A673 (cell line): ENCODE measurements at regions of chr20 and their contacts with region 1.

Region 1: GRCh38 chr20:19661717-19662636 is 96.1 kb upstream of the RIN2 start:
- DNase-seq: peak; percentile 86
- H3K4me3 ChIP-seq: no peak overlapping the region
- H3K27ac ChIP-seq: peak overlapping the region; percentile 45
- H3K4me1 ChIP-seq: peaks cover 38% of the 10 kb centered on the region
- H3K27me3 ChIP-seq: no peaks in the 10 kb centered on the region
- CTCF ChIP-seq: peak; percentile 98

Region 2: DNA sequence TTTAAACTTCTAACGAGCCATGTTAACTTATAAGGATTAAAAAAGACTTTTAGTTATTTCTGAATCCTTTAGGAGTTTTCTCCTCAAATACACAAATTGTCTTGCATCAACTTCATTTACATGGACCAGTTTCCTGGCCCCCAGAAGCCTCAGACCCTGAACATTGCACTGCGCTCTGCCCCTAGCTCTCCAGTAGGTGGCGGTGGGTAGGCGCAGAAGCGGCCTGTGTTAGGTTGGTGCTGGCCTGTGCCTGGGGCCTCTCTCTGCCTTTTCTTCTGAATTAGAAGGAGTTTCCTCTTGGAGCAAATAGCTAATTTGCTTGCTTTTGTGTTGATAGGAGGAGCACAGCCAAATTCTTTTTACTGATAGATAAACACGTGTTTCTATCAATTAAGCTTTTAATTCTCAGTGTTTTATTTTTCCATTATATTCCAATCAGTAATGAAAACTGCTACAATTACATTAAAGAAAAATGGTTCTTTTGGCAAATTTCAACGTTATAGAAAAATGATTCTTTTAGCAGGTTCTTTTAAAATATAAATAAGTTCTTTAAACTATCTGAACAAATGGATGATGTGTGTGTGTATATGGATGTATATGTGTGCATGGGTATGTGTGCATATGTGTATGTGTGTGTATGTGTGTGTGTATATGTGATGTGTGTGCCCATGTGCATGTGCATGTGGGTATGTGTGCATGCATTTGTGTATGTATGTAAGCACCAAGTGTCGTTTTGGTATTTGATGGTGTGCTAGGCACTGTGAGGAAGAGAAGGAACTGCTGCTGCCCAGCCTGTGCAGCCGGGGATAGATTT is 1029.6 kb before region 1 on chr20:
- CTCF ChIA-PET with region 1: interaction called, 8 read pairs
- POLR2A ChIA-PET with region 1: no interaction called
- intact Hi-C with region 1: loop called (anchors 5 kb)
- DNase-seq: peak; percentile 74
- H3K4me3 ChIP-seq: no peak overlapping the region
- H3K27ac ChIP-seq: no peak overlapping the region
- H3K4me1 ChIP-seq: no peaks in the 10 kb centered on the region
- H3K27me3 ChIP-seq: no peaks in the 10 kb centered on the region
- CTCF ChIP-seq: peak; percentile 96

Region 3: GRCh38 chr20:18904624-18905023 is 757.4 kb before region 1 on chr20:
- CTCF ChIA-PET with region 1: no interaction called
- POLR2A ChIA-PET with region 1: no interaction called
- intact Hi-C with region 1: loop called (anchors 5 kb)
- DNase-seq: peak; percentile 28
- H3K4me3 ChIP-seq: no peak overlapping the region
- H3K27ac ChIP-seq: no peak overlapping the region
- H3K4me1 ChIP-seq: no peaks in the 10 kb centered on the region
- H3K27me3 ChIP-seq: no peaks in the 10 kb centered on the region
- CTCF ChIP-seq: peak; percentile 39

Region 4: DNA sequence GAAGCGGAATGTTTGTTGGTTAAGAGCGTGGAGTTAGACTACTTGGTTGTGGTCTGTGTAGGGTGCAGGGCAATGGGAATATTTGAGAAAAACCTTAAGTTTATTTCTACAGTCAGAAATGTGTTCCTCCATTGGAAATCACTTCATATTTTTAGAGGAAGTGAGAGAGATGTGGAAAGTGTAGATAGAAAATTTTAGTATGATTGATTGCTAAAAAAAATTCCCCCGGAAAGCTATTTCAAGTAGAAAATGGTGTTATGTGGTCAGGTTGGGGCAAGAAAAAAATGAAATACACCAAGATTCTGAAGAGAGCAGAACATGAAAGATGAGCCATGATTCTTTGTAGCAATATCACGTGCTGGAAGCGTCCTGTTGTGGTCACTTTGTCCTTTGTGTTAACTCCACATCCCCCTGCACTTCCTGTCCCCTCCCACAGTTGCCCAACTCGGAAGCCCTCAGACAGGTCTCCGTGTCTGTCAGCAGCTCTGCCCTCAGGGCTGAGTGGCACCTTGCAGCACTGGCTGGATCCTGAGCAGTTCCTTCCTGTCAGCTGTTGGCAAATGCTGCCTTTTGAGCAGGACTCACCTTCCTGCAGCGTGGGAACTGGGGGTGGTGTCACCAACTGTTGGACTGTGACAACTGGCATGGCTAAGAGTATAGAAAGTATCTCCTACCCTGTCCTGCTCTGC is 587.0 kb before region 1 on chr20:
- CTCF ChIA-PET with region 1: no interaction called
- POLR2A ChIA-PET with region 1: no interaction called
- intact Hi-C with region 1: loop called (anchors 5 kb)
- DNase-seq: no peak
- H3K4me3 ChIP-seq: no peak overlapping the region
- H3K27ac ChIP-seq: no peak overlapping the region
- H3K4me1 ChIP-seq: no peaks in the 10 kb centered on the region
- H3K27me3 ChIP-seq: no peaks in the 10 kb centered on the region
- CTCF ChIP-seq: no peak

Region 5: DNA sequence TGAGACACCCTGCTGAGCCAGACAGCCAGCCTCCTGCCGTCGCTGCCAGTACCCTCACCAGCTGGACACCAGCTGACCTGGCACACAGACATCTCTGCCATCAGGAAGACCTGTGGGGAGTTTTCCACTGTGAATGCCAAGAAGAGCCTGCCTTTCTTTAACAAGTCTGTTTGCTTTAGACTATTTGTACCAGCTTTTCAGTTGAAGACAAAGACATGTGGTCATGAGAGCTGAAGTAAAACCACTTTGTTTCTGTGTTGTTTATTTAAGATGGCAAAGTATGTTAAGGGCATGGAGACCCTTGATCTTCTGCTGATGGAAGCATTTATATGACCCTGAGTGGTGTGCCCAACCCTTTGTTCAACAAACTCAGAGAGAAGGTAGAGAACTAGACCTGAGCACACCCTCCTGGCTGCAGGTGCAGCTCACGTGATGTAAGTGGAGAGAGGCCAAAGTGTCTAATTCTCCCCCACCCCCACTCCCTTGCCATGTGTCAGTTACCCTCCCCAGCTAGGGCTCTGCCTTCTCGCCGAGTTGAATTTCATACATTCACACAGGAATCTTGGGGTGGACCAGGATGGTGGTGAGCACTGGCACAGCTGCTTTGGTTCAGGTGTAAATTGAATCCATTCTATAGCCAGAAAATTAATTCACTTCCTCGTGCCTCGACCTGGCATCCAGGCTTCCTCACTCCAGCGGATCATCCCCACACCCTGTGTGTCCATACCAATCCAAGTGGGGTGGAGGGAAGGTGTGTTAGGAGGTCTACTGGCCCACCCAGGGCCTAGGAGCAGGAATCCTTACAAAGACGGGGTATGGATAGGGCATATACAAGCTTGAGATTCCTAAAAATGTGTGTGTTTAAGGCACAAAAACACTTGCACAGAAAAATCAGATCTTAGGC is 531.6 kb before region 1 on chr20:
- CTCF ChIA-PET with region 1: no interaction called
- POLR2A ChIA-PET with region 1: no interaction called
- intact Hi-C with region 1: no loop called
- DNase-seq: no peak
- H3K4me3 ChIP-seq: no peak overlapping the region
- H3K27ac ChIP-seq: no peak overlapping the region
- H3K4me1 ChIP-seq: no peaks in the 10 kb centered on the region
- H3K27me3 ChIP-seq: no peaks in the 10 kb centered on the region
- CTCF ChIP-seq: no peak

Region 6: DNA sequence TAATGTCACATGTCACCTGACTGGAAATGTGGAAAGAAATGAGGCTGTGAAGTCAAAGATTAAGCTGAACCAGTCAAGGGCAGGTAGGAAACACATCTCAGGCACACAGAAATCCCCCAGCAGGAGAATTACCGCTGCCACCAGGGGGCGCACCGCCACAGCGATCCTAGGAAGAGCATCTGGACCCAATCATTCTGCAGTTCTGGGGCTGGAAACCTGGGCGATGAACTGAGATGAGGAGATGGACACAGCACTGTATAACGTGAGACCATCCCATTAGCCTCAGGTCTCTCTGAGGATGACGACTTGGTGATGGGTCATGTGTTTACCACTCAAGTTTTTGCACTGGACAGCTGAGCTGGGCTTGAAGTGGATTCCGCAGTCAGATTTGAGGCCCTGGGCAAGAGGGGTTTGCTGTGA is 456.0 kb before region 1 on chr20:
- CTCF ChIA-PET with region 1: no interaction called
- POLR2A ChIA-PET with region 1: no interaction called
- intact Hi-C with region 1: loop called (anchors 2 kb)
- DNase-seq: peak; percentile 81
- H3K4me3 ChIP-seq: no peak overlapping the region
- H3K27ac ChIP-seq: no peak overlapping the region
- H3K4me1 ChIP-seq: peaks cover 53% of the 10 kb centered on the region
- H3K27me3 ChIP-seq: no peaks in the 10 kb centered on the region
- CTCF ChIP-seq: peak; percentile 99

Region 7: DNA sequence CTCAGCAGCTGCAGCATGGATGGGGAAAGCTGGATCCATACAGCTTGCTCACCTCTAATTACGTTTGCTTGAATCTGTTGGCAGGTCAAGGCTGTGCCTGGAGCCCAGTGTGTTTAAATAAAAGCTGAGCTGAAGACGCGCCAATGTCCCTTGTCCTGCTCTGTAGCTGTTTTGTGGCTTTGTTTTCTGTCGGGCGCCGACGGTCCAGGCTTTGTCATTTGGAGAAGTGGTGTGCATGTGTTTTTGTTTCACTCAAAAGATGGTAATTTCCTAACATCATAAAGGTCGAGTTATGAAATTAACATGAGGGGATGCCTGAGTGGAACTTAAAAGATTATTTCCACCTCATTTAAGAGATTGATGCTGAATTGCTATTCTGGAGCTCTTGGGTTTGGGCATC is 342.0 kb before region 1 on chr20:
- CTCF ChIA-PET with region 1: no interaction called
- POLR2A ChIA-PET with region 1: no interaction called
- intact Hi-C with region 1: loop called (anchors 1 kb)
- DNase-seq: peak; percentile 47
- H3K4me3 ChIP-seq: peak overlapping the region; percentile 40
- H3K27ac ChIP-seq: peak overlapping the region; percentile 92
- H3K4me1 ChIP-seq: peaks cover 92% of the 10 kb centered on the region
- H3K27me3 ChIP-seq: no peaks in the 10 kb centered on the region
- CTCF ChIP-seq: no peak

Region 8: DNA sequence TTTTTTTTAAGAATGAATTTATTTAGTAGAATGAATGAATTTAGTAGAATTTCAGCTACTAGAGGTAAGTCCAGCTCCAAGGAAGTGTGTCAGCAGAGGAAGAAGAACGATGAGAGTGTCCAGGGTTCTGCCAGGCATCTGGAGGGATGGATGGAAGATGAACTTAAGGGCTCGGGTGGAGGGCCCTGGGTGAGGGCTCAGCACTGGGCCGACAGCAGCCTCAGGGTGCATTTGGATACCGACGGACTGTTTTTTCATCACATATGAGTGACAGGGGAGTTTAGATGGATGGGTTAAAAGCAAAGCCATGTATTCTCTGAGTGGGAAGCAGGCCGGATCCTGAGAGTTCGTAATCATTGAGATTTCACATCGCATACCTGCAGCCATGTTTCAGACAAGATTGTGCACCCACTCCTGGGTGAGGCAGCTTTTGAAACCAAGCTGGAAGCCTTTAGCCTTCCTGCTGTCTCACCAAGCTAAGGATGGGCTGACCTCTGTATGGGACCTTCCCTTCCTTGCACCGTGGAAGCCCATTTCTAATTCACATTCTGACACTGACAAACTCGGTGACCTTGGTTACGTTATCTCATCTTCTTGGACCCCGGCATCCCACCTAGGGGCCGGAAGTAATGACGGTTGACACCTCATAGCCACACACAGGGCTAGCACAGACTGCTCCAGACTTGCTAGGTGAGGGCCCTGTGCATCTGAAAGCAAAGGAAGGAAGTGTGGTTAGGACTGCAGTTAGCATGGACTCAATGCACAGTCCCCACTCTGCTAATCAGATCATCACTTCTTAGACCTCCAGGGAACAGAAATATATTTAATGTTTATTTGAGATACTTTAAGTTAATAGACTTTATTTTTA is 221.1 kb before region 1 on chr20:
- CTCF ChIA-PET with region 1: no interaction called
- POLR2A ChIA-PET with region 1: no interaction called
- intact Hi-C with region 1: no loop called
- DNase-seq: no peak
- H3K4me3 ChIP-seq: no peak overlapping the region
- H3K27ac ChIP-seq: no peak overlapping the region
- H3K4me1 ChIP-seq: no peaks in the 10 kb centered on the region
- H3K27me3 ChIP-seq: no peaks in the 10 kb centered on the region
- CTCF ChIP-seq: no peak

Region 9: DNA sequence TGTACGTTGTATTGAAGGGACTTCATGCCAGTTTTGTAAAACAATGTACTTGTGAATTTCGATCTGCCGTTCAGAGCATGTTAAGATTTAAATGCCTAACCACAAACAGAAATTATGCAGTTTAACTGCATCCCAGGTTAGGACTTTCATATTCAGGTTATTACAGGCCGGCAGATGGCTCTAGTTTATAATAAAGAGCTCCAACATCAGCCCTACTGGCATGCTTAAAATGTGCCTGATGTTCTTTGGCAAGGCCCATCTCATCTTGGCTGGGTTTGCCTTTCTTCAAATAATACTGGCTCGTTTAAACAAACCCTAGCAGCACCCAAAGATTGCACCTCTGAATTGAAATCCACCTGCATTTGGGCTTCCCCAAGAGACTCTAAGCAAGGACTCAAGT is 73.2 kb before region 1 on chr20:
- CTCF ChIA-PET with region 1: interaction called, 4 read pairs
- POLR2A ChIA-PET with region 1: no interaction called
- intact Hi-C with region 1: loop called (anchors 5 kb)
- DNase-seq: peak; percentile 59
- H3K4me3 ChIP-seq: no peak overlapping the region
- H3K27ac ChIP-seq: peak overlapping the region; percentile 87
- H3K4me1 ChIP-seq: peaks cover 37% of the 10 kb centered on the region
- H3K27me3 ChIP-seq: no peaks in the 10 kb centered on the region
- CTCF ChIP-seq: peak; percentile 26; the same call in 1 of the 2 replicates

Region 10: DNA sequence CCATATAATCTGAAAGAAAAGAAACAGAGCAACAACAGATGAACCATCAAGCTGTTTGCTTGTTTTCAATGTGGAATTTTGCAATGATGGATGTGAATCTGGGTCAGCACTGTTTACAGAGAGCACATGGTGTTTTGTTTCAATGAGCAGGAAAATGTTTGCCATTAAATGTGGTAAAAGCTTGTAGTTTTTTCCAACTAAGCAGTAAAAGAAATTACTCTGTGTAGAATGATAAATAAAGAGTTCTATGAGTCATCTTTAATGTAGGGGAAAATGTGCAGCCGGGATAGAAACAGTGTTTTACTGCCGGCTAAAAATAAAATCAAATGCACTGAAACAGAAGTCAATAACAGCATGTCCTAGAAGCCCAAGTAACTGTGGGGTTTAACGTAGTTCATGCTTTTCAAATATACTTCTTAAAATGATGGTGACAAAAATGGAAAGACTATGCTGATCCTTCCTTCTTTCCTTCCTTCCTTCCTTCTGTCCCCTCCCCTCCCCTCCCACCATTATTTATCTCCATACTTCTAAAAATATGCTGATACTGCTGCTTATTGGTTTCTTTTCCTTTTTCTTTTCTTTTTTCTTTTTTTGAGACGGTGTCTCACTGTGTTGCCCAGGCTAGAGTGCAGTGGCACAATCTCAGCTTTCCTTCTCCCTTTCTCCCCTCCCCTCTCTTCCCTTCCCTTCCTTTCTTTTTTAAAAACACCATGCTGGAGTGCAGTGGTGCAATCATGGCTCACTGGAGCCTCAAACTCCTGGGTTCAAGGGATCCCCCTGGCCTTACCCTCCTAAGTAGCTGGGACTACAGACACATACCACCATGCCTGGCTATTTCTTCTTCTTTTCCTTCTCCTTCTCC is 348.9 kb after region 1 on chr20:
- CTCF ChIA-PET with region 1: no interaction called
- POLR2A ChIA-PET with region 1: no interaction called
- intact Hi-C with region 1: no loop called
- DNase-seq: peak; percentile 20
- H3K4me3 ChIP-seq: no peak overlapping the region
- H3K27ac ChIP-seq: no peak overlapping the region
- H3K4me1 ChIP-seq: no peaks in the 10 kb centered on the region
- H3K27me3 ChIP-seq: no peaks in the 10 kb centered on the region
- CTCF ChIP-seq: no peak